ENCODE measurements at regions of chr18 and their contacts with region 1.

Region 1: GRCh38 chr18:51278045-51278649 is 80.7 kb upstream of the MEX3C start:
- DNase-seq: peak; percentile 83
- ATAC-seq: peak; percentile 82
- H3K4me3 Mint-ChIP-seq: no peak overlapping the region
- H3K27ac Mint-ChIP-seq: no peak overlapping the region
- H3K4me1 Mint-ChIP-seq: peaks cover 40% of the 10 kb centered on the region
- H3K27me3 Mint-ChIP-seq: no peaks in the 10 kb centered on the region
- CTCF ChIP-seq: peak; percentile 68

Region 2: DNA sequence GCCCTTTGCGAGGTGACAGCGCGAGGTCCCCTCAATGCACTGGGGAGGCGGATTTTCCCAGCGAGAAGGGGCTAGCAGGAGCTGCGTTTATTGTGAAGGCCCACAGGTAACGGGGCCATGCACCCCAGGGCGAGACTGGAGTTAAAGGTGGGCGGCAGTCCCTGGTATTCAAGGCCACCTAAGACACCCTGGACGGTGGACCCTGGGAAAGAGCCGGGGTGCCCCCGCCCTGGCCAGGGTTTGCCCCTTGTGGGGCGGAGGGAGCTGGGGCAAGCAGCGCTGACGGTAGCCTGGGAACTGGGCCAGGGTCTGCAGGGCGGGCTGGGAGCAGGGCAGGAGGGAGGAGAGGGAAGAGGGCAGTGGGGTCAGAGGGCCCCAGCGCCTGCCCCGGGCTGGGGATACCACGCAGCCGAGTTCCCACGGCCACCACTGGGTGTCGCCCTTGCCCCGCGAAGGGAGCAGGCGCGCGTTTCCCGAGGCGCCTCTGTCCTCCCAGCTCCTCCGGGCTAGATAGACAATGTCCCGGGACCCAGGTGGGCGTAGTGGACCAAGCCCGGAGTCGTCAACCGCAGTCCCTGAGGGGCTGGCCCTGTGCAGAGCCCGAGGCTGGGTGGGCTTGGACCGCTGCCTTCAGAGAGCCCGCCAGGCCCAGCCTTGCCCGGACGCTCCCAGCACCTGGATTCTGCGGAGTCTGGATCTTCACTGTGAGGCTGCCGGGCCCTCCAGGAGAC is 167.9 kb before region 1 on chr18:
- CTCF ChIA-PET with region 1: interaction called, 10 read pairs
- POLR2A ChIA-PET with region 1: no interaction called
- DNase-seq: peak; percentile 89
- ATAC-seq: peak; percentile 98
- H3K4me3 Mint-ChIP-seq: no peak overlapping the region
- H3K27ac Mint-ChIP-seq: no peak overlapping the region
- H3K4me1 Mint-ChIP-seq: no peaks in the 10 kb centered on the region
- H3K27me3 Mint-ChIP-seq: peaks cover 3% of the 10 kb centered on the region; the same call in 1 of the 2 replicates
- CTCF ChIP-seq: peak; percentile 98

Region 3: DNA sequence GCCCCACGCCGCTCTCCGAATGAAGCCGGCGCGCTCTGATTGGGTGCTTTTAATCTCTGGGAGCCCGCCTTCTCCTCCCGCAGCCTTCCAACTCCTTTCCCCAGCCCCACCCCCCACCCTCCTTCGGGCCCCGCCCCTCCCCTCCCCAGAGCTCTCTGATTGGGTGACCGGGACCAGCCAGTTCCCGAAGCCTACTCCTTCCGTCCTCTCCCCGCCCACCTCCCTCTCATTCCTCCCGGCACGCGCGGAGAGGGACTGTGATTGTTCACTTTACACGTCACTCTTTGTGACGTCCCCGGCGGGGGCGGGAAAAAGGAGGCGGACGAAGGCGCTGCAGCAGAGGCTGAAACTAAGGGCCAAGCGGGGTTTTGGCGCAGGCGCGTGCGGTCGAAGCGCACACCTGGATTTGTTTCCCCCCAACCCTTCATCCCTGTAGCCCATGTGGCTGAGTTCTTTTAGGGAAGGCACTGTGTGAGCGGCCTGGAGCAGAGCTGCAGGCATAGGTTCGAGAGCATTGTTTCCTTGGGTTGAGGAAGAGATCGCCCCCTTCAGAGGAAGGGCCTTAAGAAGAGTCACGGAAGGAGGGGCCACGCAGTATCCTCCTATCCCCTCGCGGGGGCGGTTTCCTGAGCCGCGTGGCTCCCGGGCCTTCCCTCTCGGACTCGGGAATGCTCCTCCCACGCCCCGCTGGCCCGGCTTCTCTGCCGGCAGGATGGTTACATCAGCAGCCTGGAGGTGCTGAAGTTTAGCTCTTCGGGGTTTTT is 80.3 kb before region 1 on chr18 and contains the start of gene MEX3C:
- CTCF ChIA-PET with region 1: interaction called, 10 read pairs
- POLR2A ChIA-PET with region 1: no interaction called
- DNase-seq: peak; percentile 99
- ATAC-seq: peak; percentile 90
- H3K4me3 Mint-ChIP-seq: peak within 1 kb of the TSS; percentile 96
- H3K27ac Mint-ChIP-seq: peak within 1 kb of the TSS; percentile 99
- H3K4me1 Mint-ChIP-seq: peaks cover 26% of the 10 kb centered on the region
- H3K27me3 Mint-ChIP-seq: no peaks in the 10 kb centered on the region
- CTCF ChIP-seq: no peak
- total RNA-seq, gene MEX3C: 70.4 to 79.4 TPM (median 73.9 TPM) in 3 replicates

Region 4: DNA sequence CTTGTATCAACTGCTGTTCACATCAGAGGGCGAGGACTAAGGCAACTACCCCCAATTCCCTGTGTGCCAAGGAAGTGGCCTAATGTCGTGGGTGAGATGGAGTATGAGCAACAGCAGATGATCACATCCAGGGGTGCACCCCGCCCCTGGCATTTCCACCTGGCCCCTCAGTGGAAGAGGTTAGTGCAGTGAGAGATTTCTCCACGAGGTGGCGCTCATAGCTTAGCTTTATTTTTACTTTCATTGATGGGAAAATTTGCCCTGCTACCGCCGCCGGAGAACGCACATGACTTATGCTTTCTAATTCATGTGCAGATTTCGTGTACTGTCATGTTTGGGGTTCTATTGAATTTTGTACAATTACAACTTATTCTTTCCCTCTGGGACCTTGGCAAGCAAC is 390.0 kb after region 1 on chr18:
- CTCF ChIA-PET with region 1: interaction called, 10 read pairs
- POLR2A ChIA-PET with region 1: no interaction called
- DNase-seq: peak; percentile 76
- ATAC-seq: peak; percentile 85
- H3K4me3 Mint-ChIP-seq: no peak overlapping the region
- H3K27ac Mint-ChIP-seq: no peak overlapping the region
- H3K4me1 Mint-ChIP-seq: peaks cover 17% of the 10 kb centered on the region
- H3K27me3 Mint-ChIP-seq: no peaks in the 10 kb centered on the region
- CTCF ChIP-seq: peak; percentile 71

Measured in WTC11 (cell line).